WTC11 (cell line): ENCODE measurements at regions of chr7 and their contacts with region 1.

Region 1: GRCh38 chr7:143240291-143241168 is 18.7 kb downstream of the TAS2R40 start:
- DNase-seq: peak; percentile 70
- ATAC-seq: peak; percentile 99
- H3K4me3 Mint-ChIP-seq: no peak overlapping the region
- H3K27ac Mint-ChIP-seq: no peak overlapping the region
- H3K4me1 Mint-ChIP-seq: no peaks in the 10 kb centered on the region
- H3K27me3 Mint-ChIP-seq: peaks cover 22% of the 10 kb centered on the region
- CTCF ChIP-seq: peak; percentile 83

Region 2: DNA sequence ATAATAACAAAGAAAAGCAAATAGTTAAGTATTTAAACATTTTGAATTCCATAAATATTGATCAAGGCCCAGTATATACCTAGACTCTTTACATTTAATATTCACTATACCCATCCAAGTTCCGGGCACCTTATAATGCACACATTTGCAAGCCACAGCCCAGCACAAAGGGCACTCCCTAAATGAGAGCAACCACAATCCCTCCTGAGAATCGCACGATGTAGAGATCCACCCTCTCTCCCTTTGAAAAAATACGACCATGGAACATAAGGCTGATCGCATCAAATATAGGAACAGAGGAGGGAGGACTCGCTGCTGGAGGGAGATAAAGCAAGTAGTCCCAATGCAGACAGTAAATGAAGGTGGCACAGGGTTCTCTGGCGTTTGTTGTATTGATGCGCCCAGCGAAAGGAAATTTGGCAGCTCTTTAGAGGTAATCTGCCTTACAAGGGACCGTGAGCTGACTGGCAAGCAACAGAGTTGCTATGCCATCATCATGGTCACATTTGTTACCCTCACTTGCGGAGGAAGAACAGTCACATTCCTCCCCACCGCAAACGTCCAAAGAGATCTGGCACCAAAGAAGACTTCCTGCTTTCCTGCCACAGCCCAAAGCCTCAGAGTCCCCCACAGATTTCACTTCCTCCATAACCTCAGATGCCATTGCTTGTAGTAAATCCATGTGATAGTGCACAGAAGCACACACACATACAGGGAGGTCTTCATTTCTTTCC is 34.8 kb before region 1 on chr7:
- CTCF ChIA-PET with region 1: no interaction called
- POLR2A ChIA-PET with region 1: no interaction called
- DNase-seq: no peak
- ATAC-seq: no peak
- H3K4me3 Mint-ChIP-seq: no peak overlapping the region
- H3K27ac Mint-ChIP-seq: no peak overlapping the region
- H3K4me1 Mint-ChIP-seq: 0 out of 2 replicates have a peak, but pooled peaks cover 4% of the 10 kb centered on the region
- H3K27me3 Mint-ChIP-seq: no peaks in the 10 kb centered on the region
- CTCF ChIP-seq: no peak

Region 3: DNA sequence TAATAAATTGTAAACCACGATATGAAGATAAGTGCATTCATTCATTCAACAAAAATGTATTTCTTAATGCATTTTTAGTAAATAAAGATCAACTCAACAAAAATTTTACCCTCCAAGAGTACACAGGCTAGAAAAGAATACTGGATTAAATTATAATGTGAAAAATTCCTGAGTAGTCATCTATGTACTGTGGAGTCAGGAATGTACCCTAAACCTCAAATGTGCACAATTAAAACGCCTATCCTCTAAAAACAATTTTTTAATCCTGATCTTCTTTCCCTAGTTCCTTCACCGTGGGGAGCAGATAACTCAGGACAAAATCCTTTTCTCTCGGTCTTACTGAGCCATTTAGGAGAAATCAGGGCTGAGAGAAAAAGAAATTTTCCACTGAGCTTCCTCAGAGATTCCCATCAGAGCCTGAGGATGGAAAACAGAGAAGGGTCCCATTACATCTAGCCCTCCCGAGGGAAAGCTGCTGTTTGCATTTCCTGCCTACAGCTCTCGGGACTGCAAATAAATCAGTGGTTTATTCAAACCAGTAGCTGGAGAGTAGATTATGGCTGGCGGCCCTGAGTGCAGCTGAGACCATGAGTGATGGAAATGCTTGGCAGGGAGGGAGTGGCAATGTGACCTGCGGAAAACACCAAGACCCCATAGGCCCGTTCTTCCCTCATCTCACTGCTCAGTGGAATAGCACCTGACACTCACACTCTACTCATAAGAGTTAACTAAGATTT is 11.3 kb before region 1 on chr7:
- CTCF ChIA-PET with region 1: interaction called, 22 read pairs
- POLR2A ChIA-PET with region 1: no interaction called
- DNase-seq: peak; percentile 28
- ATAC-seq: peak; percentile 95
- H3K4me3 Mint-ChIP-seq: no peak overlapping the region
- H3K27ac Mint-ChIP-seq: peak overlapping the region; percentile 68
- H3K4me1 Mint-ChIP-seq: peaks cover 3% of the 10 kb centered on the region; the same call in 1 of the 2 replicates
- H3K27me3 Mint-ChIP-seq: peaks cover 16% of the 10 kb centered on the region; the same call in 1 of the 2 replicates
- CTCF ChIP-seq: no peak

Region 4: GRCh38 chr7:143256932-143257331 is 16.4 kb after region 1 on chr7:
- CTCF ChIA-PET with region 1: interaction called, 13 read pairs
- POLR2A ChIA-PET with region 1: no interaction called
- DNase-seq: no peak
- ATAC-seq: no peak
- H3K4me3 Mint-ChIP-seq: no peak overlapping the region
- H3K27ac Mint-ChIP-seq: no peak overlapping the region
- H3K4me1 Mint-ChIP-seq: no peaks in the 10 kb centered on the region
- H3K27me3 Mint-ChIP-seq: no peaks in the 10 kb centered on the region; the same call in 1 of the 2 replicates
- CTCF ChIP-seq: no peak

Region 5: DNA sequence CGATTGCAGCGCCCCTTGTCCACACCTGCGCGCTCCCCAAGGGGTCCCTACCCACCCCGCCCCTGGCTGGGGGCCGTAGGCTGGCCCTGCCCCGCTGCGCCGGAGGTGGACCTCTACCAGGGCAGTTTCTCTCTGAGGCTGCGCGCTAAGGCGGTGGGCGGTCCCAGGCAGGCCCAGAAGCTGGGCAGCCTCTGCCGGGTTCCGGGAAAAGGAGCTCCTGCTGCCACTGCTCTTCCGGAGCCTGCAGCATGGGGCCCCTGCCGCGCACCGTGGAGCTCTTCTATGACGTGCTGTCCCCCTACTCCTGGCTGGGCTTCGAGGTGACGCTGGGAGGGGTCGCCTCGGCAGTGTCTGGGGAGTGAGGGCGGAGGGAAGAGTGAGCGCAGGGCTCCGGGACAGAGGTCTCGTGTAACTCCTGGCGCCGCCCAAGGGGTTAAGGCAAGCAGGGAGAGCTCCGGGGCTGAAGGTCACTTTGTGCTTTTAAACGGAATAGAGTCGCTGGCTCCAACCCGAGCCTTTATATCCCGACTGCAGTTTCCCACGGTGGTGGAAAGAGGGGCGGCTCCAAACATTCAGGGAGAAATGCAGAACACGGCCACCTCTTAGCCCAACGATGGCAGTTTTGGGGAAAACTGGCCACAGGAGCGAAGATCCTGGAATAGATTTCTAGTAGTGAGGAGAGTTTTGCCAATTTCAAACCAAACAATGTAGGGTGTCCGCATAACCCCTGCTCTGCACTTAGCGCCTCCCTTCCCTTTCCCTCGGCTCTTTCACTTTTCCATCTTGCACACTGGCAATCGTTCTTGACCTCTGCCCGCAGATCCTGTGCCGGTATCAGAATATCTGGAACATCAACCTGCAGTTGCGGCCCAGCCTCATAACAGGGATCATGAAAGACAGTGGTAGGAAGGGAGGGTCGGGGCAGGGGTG is 23.0 kb after region 1 on chr7 and contains the start of gene GSTK1:
- CTCF ChIA-PET with region 1: interaction called, 19 read pairs
- POLR2A ChIA-PET with region 1: no interaction called
- DNase-seq: peak; percentile 73
- ATAC-seq: peak; percentile 95
- H3K4me3 Mint-ChIP-seq: peak within 1 kb of the TSS; percentile 89
- H3K27ac Mint-ChIP-seq: no peak within 1 kb of the TSS
- H3K4me1 Mint-ChIP-seq: peaks cover 12% of the 10 kb centered on the region
- H3K27me3 Mint-ChIP-seq: peaks cover 14% of the 10 kb centered on the region
- CTCF ChIP-seq: no peak
- total RNA-seq, gene GSTK1: 30.1 to 40.1 TPM (median 37.7 TPM) in 3 replicates

Region 6: DNA sequence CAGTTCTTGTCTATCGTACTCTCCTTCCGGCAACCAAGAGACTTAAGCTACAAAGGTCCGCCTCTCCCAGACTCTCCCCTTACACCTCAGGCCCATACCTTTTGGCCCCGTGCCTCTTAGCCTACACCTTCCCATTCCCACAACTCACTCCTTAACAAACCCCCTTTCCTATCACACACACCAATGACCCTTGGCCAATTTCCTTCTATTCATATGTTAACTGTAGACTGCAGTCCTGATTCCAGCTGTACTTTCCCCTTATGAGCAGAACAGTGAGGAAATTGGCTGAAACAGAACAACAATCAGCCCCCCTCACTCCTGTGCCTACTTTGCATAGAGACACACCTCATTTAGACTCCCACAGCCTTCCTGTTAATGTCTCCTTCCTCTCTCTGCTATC is 42.9 kb after region 1 on chr7:
- CTCF ChIA-PET with region 1: interaction called, 11 read pairs
- POLR2A ChIA-PET with region 1: interaction called, 6 read pairs
- DNase-seq: no peak
- ATAC-seq: peak; percentile 32
- H3K4me3 Mint-ChIP-seq: no peak overlapping the region
- H3K27ac Mint-ChIP-seq: peak overlapping the region; percentile 26
- H3K4me1 Mint-ChIP-seq: peaks cover 28% of the 10 kb centered on the region
- H3K27me3 Mint-ChIP-seq: peaks cover 47% of the 10 kb centered on the region
- CTCF ChIP-seq: no peak

Region 7: DNA sequence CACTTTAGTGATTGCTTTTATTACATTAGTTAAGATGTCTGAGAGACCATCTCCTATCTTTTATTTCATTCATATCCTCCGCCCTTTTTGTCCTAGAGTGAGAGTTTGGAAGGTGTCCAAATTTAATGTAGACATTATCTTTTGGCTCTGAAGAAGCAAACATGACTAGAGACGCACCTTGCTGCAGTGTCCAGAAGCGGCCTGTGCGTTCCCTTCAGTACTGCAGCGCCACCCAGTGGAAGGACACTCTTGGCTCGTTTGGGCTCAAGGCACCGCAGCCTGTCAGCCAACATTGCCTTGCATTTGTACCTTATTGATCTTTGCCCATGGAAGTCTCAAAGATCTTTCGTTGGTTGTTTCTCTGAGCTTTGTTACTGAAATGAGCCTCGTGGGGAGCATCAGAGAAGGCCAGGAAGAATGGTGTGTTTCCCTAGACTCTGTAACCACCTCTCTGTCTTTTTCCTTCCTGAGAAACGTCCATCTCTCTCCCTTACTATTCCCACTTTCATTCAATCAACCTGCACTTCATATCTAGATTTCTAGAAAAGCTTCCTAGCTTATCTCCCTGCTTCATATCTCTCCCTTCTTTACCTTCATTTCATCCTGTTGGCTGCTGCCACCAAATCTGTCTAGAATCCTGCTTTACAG is 65.0 kb after region 1 on chr7:
- CTCF ChIA-PET with region 1: interaction called, 20 read pairs
- POLR2A ChIA-PET with region 1: no interaction called
- DNase-seq: peak; percentile 85
- ATAC-seq: peak; percentile 91
- H3K4me3 Mint-ChIP-seq: no peak overlapping the region
- H3K27ac Mint-ChIP-seq: no peak overlapping the region
- H3K4me1 Mint-ChIP-seq: no peaks in the 10 kb centered on the region
- H3K27me3 Mint-ChIP-seq: no peaks in the 10 kb centered on the region
- CTCF ChIP-seq: peak; percentile 73

Region 8: DNA sequence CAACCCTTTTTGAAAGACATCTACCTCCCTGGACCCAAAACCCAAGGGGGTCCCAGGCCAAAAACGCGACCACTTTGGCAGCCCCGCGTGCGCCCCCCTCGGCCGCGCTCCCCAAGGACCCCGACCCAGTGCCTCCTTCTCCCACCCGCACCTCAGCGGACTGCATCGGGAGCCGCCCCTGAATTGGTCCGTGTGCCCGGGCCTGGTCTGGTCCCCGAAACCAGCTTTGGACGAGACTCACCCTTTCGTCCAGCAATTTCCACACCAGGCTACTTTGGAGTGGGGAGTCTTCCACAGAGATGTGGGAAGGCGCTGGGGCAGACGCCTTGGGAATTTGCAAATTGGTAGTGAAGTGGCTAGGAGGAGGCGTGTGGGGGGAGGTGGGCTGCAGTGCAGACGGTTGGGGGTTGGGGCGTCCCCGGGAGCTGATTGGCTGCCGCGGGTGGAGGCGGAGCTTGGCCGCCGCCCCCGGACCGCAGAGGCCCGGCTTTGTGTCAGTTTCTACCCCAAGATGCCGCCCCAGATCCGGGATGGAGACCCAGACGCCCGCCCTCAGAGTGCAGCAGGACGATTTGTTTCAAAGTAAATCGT is 644.5 kb after region 1 on chr7:
- CTCF ChIA-PET with region 1: no interaction called
- POLR2A ChIA-PET with region 1: no interaction called
- DNase-seq: peak; percentile 87
- ATAC-seq: peak; percentile 87
- H3K4me3 Mint-ChIP-seq: peak overlapping the region; percentile 87
- H3K27ac Mint-ChIP-seq: no peak overlapping the region
- H3K4me1 Mint-ChIP-seq: peaks cover 33% of the 10 kb centered on the region
- H3K27me3 Mint-ChIP-seq: peaks cover 20% of the 10 kb centered on the region
- CTCF ChIP-seq: no peak